Left colon (tissue), 2 donors: ENCODE measurements at regions of chr12 and their contacts with region 1.

Region 1: GRCh38 chr12:79547735-79548609 is 142.8 kb downstream of the PAWR start:
- DNase-seq: peak in 1 of 2 donors; percentile 57
- ATAC-seq: peak; percentile 80

Region 2: GRCh38 chr12:79317179-79317847 is 230.7 kb before region 1 on chr12:
- intact Hi-C with region 1: no loop called
- DNase-seq: no peak
- ATAC-seq: no peak

Region 3: GRCh38 chr12:79737875-79738718 is 190.1 kb after region 1 on chr12:
- intact Hi-C with region 1: loop called in 1 of 2 experiments (anchors 5 kb)
- DNase-seq: peak in 1 of 2 donors; percentile 43
- ATAC-seq: peak; percentile 86